ENCODE measurements at regions of chr10 and their contacts with region 1.

Region 1: GRCh38 chr10:88915781-88916180 is 35.7 kb downstream of the STAMBPL1 start:
- DNase-seq: no peak
- ATAC-seq: no peak
- H3K4me3 ChIP-seq: no peak overlapping the region
- H3K4me3 Mint-ChIP-seq: no peak overlapping the region
- H3K27ac ChIP-seq: no peak overlapping the region
- H3K27ac Mint-ChIP-seq: peak overlapping the region in 4 of 9 donors; percentile 7 to 39 (median 24)
- H3K4me1 ChIP-seq: no peaks in the 10 kb centered on the region
- H3K4me1 Mint-ChIP-seq: peaks cover 0 to 13% (median 0%) of the 10 kb centered on the region in 7 donors
- H3K27me3 ChIP-seq: no peaks in the 10 kb centered on the region
- H3K27me3 Mint-ChIP-seq: no peaks in the 10 kb centered on the region

Region 2: DNA sequence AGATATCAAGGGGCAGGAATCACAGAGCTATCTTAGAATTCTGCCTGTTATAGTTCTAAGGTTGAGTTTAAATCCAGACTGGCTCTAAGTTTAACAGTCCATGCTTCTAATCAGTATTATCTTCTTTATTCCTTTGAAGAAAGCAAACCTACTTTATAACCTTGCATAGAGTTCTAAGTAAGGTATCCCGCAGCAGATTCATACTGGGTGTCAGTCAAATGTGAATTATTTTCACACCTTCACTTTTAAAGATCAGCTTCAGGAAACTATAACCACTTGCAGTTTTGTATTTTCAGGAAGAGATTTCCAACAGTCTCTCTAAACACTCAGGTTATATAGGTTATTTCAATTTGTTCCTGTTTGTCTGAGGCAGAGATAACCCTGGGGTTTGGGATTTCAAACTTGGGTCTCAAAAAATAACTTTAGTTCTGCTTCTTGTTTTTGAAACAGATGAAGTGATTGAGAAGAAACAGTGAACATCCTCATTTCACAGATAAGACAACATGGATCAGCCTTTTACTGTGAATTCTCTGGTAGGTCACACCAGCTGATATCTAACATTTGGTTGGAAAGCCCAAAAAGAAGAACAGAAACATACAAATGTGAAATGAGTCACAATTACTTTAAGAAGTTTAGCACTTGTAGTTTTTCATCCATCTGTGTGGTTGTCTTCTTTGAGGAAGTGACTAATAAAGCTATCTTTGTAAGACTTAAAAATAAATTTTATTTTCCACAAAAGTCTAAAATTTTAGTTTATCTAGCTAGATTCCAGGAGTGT is 14.4 kb before region 1 on chr10:
- CTCF ChIA-PET with region 1: no interaction called
- POLR2A ChIA-PET with region 1: no interaction called
- intact Hi-C with region 1: loop called in 1 of 2 experiments (anchors 2 kb)
- DNase-seq: no peak
- ATAC-seq: peak; percentile 84
- H3K4me3 ChIP-seq: no peak overlapping the region
- H3K4me3 Mint-ChIP-seq: peak overlapping the region in 1 of 10 donors; percentile 34
- H3K27ac ChIP-seq: no peak overlapping the region
- H3K27ac Mint-ChIP-seq: peak overlapping the region in 4 of 9 donors; percentile 43 to 60 (median 53)
- H3K4me1 ChIP-seq: peaks cover 15 to 24% of the 10 kb centered on the region in 2 donors
- H3K4me1 Mint-ChIP-seq: peaks cover 23 to 58% (median 40%) of the 10 kb centered on the region in 7 donors
- H3K27me3 ChIP-seq: no peaks in the 10 kb centered on the region
- H3K27me3 Mint-ChIP-seq: no peaks in the 10 kb centered on the region

Measured in naive thymus-derived CD4-positive, alpha-beta T cell (primary cell).